ENCODE measurements at regions of chr13 and their contacts with region 1.

Region 1: DNA sequence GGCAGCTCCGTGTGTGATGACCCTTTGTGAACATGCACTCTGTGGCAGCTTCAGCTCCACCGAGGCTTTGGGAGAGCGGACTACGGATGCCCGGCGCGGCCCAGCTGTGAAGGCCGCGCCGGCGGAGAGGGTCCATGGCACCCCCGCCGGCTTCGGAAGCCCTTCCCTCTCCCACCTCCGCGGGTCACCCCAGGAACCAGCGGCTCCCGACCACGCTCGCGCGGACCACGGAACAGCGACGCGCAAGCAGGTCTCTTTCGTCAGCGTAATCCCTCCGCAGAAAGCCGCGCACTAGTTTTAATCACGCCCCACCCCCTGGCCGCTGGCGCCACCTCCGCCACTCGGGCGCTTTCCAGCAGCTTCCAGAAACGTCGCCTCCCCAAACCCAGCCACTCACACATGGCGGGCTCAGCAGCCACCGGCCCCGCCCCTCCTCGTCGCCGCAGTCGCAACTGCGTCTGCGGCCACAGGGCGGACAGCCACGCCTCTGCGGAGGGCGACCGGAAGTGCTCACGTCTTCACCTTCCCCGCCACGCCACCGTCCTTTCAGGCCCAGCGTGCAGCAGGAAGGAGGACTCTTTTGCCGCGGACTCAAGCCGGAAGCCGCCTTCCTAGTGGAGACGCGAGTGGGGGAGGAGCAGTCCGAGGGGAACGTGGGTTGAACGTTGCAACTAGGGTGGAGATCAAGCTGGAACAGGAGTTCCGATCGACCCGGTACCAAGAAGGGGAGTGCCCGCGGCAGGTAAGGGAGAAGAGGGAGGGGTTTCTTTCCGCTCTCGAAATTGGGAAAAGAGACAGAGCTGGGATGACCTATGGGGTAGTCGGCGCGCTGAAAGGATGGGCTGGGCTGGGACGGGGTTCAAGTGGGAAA is at the start of gene USPL1:
- DNase-seq: peak; percentile 99
- H3K4me3 ChIP-seq: peak within 1 kb of the TSS; percentile 79
- H3K27ac ChIP-seq: peak within 1 kb of the TSS; percentile 99
- H3K4me1 ChIP-seq: peaks cover 12% of the 10 kb centered on the region
- H3K27me3 ChIP-seq: no peaks in the 10 kb centered on the region
- CTCF ChIP-seq: no peak
- total RNA-seq, gene USPL1: 8.8 to 14.8 TPM

Region 2: GRCh38 chr13:30465585-30466357 is 151.8 kb before region 1 on chr13 and contains the start of gene HMGB1:
- intact Hi-C with region 1: loop called (anchors 10 kb)
- DNase-seq: peak; percentile 99
- H3K4me3 ChIP-seq: peak within 1 kb of the TSS; percentile 86
- H3K27ac ChIP-seq: peak within 1 kb of the TSS; percentile 99
- H3K4me1 ChIP-seq: peaks cover 4% of the 10 kb centered on the region
- H3K27me3 ChIP-seq: no peaks in the 10 kb centered on the region
- CTCF ChIP-seq: no peak
- total RNA-seq, gene HMGB1: 277 to 445 TPM

Region 3: GRCh38 chr13:30679483-30680330 is 62.2 kb after region 1 on chr13:
- intact Hi-C with region 1: no loop called
- DNase-seq: no peak
- H3K4me3 ChIP-seq: no peak overlapping the region
- H3K27ac ChIP-seq: no peak overlapping the region
- H3K4me1 ChIP-seq: no peaks in the 10 kb centered on the region
- H3K27me3 ChIP-seq: no peaks in the 10 kb centered on the region
- CTCF ChIP-seq: no peak

Region 4: DNA sequence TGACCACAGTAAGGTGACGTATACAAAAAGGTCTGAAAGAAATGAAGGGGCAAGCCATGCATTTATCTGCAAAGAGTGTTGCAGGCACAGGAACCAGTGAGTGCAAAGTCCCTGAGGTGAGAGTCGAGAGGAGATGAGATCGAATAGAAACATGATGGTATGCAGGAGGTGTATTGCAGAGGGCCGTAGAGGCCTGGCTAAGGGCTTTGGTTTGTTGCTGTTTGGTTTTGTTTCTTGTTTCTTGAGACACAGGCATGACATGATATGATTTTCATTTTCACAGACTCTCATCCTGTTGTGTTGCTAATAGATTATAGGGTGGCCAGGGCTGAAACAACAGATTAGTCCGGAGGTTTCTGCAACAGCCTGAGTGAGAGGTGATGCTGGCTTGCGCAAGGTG is 463.8 kb after region 1 on chr13:
- intact Hi-C with region 1: no loop called
- DNase-seq: no peak
- H3K4me3 ChIP-seq: no peak overlapping the region
- H3K27ac ChIP-seq: no peak overlapping the region
- H3K4me1 ChIP-seq: no peaks in the 10 kb centered on the region
- H3K27me3 ChIP-seq: no peaks in the 10 kb centered on the region
- CTCF ChIP-seq: no peak

Measured in colonic mucosa (tissue), 4 donors.